Ovary (tissue), 10 donors: ENCODE measurements at regions of chr3 and their contacts with region 1.

Region 1: GRCh38 chr3:110686701-110687100 is 384.9 kb upstream of the NECTIN3 start:
- DNase-seq: no peak
- H3K4me3 ChIP-seq: no peak overlapping the region
- H3K27ac ChIP-seq: no peak overlapping the region
- H3K4me1 ChIP-seq: no peaks in the 10 kb centered on the region
- H3K27me3 ChIP-seq: no peaks in the 10 kb centered on the region
- CTCF ChIP-seq: no peak
- EP300 ChIP-seq: no peak
- POLR2A ChIP-seq: no peak

Region 2: GRCh38 chr3:110650741-110651140 is 36.0 kb before region 1 on chr3:
- intact Hi-C with region 1: no loop called
- DNase-seq: no peak
- H3K4me3 ChIP-seq: no peak overlapping the region
- H3K27ac ChIP-seq: no peak overlapping the region
- H3K4me1 ChIP-seq: no peaks in the 10 kb centered on the region
- H3K27me3 ChIP-seq: no peaks in the 10 kb centered on the region
- CTCF ChIP-seq: no peak
- EP300 ChIP-seq: no peak
- POLR2A ChIP-seq: no peak

Region 3: DNA sequence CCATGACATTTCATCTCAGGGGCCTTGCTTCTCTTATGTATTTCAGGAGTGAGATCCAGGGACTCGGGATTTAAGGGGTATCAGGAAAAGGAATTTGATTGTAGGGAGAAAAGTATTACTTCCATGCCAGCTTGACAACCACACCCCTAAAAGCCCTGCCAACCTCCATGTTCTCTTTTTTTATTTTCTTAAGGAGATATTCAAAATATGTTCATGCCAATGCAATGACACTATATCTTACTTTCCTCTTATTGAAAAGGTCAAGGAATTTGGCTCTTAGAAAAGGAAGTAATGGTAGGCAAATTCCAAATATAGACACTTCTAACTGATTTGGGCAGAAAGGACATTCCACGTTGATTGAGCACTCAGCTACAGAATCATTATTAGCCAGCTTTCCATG is 22.6 kb before region 1 on chr3:
- intact Hi-C with region 1: loop called in 1 of 4 experiments (anchors 1 kb)
- DNase-seq: no peak
- H3K4me3 ChIP-seq: no peak overlapping the region
- H3K27ac ChIP-seq: no peak overlapping the region
- H3K4me1 ChIP-seq: no peaks in the 10 kb centered on the region
- H3K27me3 ChIP-seq: no peaks in the 10 kb centered on the region
- CTCF ChIP-seq: no peak
- EP300 ChIP-seq: no peak
- POLR2A ChIP-seq: no peak